ENCODE measurements at regions of chr11 and their contacts with region 1.

Region 1: GRCh38 chr11:112806876-112807275 is 154.3 kb upstream of the NCAM1 start:
- DNase-seq: no peak
- H3K4me3 Mint-ChIP-seq: no peak overlapping the region
- H3K27ac Mint-ChIP-seq: no peak overlapping the region
- H3K4me1 Mint-ChIP-seq: no peaks in the 10 kb centered on the region
- H3K27me3 Mint-ChIP-seq: peaks cover 6% of the 10 kb centered on the region

Region 2: DNA sequence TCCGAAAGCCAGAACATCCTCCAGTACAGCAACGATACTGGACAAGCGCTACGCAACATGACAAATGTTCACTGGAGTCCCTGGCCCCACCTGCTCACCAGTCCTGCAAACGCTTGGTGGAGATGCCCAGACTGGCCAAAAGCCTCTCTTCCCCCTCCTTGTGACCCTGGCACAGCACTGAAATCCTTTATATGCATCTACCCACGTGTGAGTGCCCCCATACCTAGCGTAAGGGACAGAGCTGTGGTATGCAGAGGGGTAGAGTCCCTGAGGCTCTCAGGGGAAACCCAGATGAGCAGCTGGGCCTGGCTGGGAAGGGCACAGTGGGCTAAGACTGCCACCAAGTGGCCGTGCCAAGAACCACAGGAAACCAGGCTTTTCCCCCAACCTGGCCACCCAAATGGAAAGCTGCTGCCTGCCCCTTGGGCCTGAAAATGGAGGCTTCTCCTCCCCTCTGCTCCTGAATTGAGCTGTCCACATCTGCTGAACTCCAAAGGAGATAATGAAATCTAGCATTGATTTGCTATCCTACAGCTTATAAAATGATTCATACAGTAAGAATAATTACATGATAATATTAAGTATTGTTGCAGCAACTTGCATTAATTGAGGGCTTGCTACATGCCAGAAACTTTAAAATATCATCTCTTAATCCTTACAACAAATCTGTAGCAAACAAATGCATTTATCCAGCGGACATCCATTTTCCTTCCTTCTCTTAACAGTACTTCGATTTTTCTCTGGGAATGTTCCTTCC is 482.7 kb after region 1 on chr11:
- intact Hi-C with region 1: loop called (anchors 10 kb)
- DNase-seq: peak; percentile 90
- H3K4me3 Mint-ChIP-seq: no peak overlapping the region
- H3K27ac Mint-ChIP-seq: no peak overlapping the region
- H3K4me1 Mint-ChIP-seq: no peaks in the 10 kb centered on the region
- H3K27me3 Mint-ChIP-seq: peaks cover 5% of the 10 kb centered on the region

Measured in activated CD4-positive, alpha-beta T cell treated with anti-CD3 and anti-CD28 coated beads, Interleukin-2, amount 10 ng/mL, durations not matched to agents 24 days and 14 days (primary cell).